ENCODE measurements at regions of chr12 and their contacts with region 1.

Region 1: DNA sequence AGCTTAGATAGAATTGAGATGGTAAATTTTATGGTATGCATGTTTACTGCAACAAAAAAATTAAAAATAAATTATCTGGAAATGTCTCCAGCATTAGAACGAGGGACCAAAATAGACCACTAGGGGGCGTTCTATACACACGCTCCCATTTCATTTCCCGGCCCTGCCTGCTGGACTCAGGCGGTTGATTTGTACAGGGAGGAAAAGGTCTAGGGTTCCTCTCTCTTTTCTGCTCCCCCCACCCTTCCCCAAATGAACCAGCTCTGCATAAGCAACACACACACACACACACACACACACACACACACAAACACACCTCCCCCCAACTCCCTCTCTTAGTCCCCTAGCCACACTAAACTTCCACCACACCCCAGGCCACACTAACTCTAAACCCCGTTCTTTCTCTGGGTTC is 7.8 kb upstream of the DTX1 start:
- DNase-seq: no peak
- ATAC-seq: peak; percentile 87
- H3K4me3 ChIP-seq: no peak overlapping the region
- H3K27ac ChIP-seq: no peak overlapping the region
- H3K4me1 ChIP-seq: peaks cover 35% of the 10 kb centered on the region
- H3K27me3 ChIP-seq: no peaks in the 10 kb centered on the region
- CTCF ChIP-seq: peak; percentile 61 to 88 (median 75)
- EP300 ChIP-seq: no peak
- POLR2A ChIP-seq: no peak
- RAD21 ChIP-seq: peak; percentile 98

Region 2: DNA sequence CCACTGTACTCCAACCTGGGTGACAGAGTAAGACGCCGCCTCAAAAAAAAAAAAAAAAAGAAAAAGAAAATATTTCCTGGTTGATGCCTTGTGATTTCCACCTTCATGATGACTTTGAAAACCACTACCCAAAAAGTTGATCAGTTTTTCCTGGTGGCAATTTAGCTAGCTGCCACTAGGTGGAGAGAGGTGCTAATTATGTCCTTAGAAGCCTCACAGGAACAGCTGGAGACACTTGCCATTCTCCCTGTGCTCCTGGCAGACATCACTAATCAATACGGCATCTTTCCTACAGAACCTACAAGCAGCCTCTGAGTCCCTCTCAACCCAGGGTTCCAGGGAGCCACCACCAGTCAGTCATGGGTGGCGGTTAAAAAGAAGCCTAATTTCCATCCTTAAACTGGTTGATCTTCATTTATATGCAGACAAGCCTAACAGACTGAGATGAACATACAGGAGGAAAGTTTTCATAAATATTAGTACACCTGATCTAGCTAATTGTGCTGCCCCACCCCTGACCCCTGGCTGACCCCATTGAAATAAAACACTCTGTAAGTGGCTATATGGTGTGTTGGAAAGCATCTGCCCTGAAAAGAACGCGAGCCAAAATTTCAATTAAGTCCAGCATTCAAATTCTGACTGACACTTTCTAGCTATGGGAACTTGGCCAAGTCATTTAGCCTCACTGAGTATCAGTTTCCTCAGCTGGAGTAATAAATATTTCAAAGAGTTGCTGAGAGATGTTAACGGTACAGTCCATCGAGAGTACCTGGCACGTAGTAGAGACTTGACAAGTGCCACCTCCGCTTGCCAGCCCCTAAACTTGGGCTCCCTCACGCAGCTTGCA is 148.2 kb before region 1 on chr12:
- CTCF ChIA-PET with region 1: interaction called, 8 read pairs
- POLR2A ChIA-PET with region 1: no interaction called
- RAD21 ChIA-PET with region 1: no interaction called
- SMC1A ChIA-PET with region 1: interaction called, 11 read pairs
- in situ Hi-C with region 1: no loop called
- intact Hi-C with region 1: no loop called
- DNase-seq: no peak
- ATAC-seq: peak; percentile 75
- H3K4me3 ChIP-seq: no peak overlapping the region
- H3K27ac ChIP-seq: no peak overlapping the region
- H3K4me1 ChIP-seq: peaks cover 6% of the 10 kb centered on the region
- H3K27me3 ChIP-seq: no peaks in the 10 kb centered on the region
- CTCF ChIP-seq: peak; percentile 68 to 84 (median 73)
- EP300 ChIP-seq: no peak
- POLR2A ChIP-seq: no peak
- RAD21 ChIP-seq: peak; percentile 82

Region 3: DNA sequence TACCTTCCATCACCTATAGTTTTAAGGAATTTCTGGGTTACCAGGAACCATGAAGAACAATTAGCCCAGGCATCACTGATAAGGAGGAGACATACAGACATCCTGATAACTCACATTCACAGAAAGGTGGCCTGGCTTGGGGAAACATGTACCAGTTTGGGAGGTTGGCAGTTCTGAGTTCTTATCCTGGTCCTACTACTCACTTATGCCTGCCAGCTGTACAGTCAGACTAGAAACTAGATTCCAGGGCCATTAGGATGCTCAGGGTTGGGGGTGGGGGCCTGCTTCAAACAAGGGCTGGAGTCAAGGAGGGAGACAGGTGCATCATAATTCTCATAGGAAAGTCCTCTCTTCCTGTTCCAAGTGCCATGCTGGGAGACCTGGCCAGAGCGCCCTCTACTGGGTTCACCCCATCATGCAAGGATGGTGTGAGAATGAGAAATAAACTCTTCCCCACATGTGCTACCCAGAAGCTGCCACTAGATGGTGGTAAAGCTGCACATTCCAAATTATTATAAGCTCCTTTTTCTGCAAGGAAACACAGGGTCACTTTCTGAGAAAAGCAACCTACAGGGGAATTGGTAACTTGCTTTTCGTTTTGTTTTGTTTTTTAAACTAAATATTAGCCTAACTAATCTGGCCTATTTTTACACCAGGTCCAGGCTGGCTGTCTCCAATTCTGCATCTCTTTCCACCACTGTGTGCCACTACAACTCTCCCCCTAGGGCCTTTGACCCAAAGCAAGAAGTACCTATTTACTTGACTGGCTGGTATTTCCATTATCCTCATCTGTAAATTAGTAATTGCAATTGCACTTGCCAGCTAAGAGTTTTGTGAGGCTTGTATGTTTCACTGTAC is 56.0 kb before region 1 on chr12:
- CTCF ChIA-PET with region 1: interaction called, 14 read pairs
- POLR2A ChIA-PET with region 1: no interaction called
- RAD21 ChIA-PET with region 1: interaction called, 5 read pairs
- SMC1A ChIA-PET with region 1: interaction called, 12 read pairs
- in situ Hi-C with region 1: no loop called
- intact Hi-C with region 1: no loop called
- DNase-seq: no peak
- ATAC-seq: peak; percentile 74
- H3K4me3 ChIP-seq: no peak overlapping the region
- H3K27ac ChIP-seq: no peak overlapping the region
- H3K4me1 ChIP-seq: no peaks in the 10 kb centered on the region
- H3K27me3 ChIP-seq: no peaks in the 10 kb centered on the region
- CTCF ChIP-seq: peak; percentile 81 to 99 (median 83); a peak in 5 of 6 replicates
- EP300 ChIP-seq: no peak
- POLR2A ChIP-seq: no peak
- RAD21 ChIP-seq: peak; percentile 81

Region 4: DNA sequence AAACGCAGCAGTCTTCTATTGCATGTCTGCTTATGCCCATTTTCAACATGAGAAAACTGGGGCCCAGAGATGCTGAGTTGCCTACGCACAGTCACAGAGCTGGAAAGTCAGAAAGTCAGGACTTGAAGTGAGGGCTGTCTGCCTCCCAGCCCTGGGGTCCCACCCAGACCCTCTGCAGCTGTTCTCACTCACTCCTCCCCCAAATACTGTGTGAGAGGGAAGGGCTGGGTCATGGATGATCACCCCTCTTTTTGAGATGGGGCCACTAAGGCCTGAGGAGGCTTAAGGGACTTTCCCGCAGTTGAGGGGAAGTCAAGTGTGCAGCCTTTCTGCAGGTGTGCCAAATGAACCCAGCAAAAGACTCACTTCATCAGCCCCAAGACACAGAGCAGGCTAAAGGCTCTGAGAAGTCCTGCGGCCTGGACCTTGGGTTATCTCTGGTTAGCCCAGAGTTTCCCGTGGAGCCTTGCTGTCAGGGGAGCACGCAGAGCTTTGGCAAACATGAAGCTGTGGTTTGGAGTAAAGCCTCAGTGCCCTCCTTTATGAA is 26.5 kb after region 1 on chr12:
- CTCF ChIA-PET with region 1: interaction called, 40 read pairs
- POLR2A ChIA-PET with region 1: no interaction called
- RAD21 ChIA-PET with region 1: interaction called, 6 read pairs
- SMC1A ChIA-PET with region 1: interaction called, 9 read pairs
- in situ Hi-C with region 1: no loop called
- intact Hi-C with region 1: loop called (anchors 1 kb)
- DNase-seq: peak; percentile 95
- ATAC-seq: peak; percentile 94
- H3K4me3 ChIP-seq: peak overlapping the region; percentile 43; the same call in 1 of the 2 replicates
- H3K27ac ChIP-seq: peak overlapping the region; percentile 71
- H3K4me1 ChIP-seq: peaks cover 53% of the 10 kb centered on the region
- H3K27me3 ChIP-seq: no peaks in the 10 kb centered on the region
- CTCF ChIP-seq: no peak
- EP300 ChIP-seq: peak; percentile 63 to 82; a peak in 2 of 4 replicates
- POLR2A ChIP-seq: peak; percentile 30; the same call in 1 of the 2 replicates
- RAD21 ChIP-seq: 0 out of 2 replicates have a peak, but pooled peaks have one; percentile 8

Region 5: GRCh38 chr12:113092607-113093408 is 44.1 kb after region 1 on chr12:
- CTCF ChIA-PET with region 1: interaction called, 121 read pairs
- POLR2A ChIA-PET with region 1: interaction called, 4 read pairs
- RAD21 ChIA-PET with region 1: interaction called, 50 read pairs
- SMC1A ChIA-PET with region 1: interaction called, 416 read pairs
- in situ Hi-C with region 1: loop called (anchors 10 kb)
- intact Hi-C with region 1: loop called (anchors 1 kb)
- DNase-seq: no peak
- ATAC-seq: peak; percentile 50
- H3K4me3 ChIP-seq: no peak overlapping the region
- H3K27ac ChIP-seq: no peak overlapping the region
- H3K4me1 ChIP-seq: peaks cover 31% of the 10 kb centered on the region
- H3K27me3 ChIP-seq: no peaks in the 10 kb centered on the region
- CTCF ChIP-seq: peak; percentile 48 to 54 (median 53); a peak in 5 of 6 replicates
- EP300 ChIP-seq: no peak
- POLR2A ChIP-seq: no peak
- RAD21 ChIP-seq: peak; percentile 69

Region 6: DNA sequence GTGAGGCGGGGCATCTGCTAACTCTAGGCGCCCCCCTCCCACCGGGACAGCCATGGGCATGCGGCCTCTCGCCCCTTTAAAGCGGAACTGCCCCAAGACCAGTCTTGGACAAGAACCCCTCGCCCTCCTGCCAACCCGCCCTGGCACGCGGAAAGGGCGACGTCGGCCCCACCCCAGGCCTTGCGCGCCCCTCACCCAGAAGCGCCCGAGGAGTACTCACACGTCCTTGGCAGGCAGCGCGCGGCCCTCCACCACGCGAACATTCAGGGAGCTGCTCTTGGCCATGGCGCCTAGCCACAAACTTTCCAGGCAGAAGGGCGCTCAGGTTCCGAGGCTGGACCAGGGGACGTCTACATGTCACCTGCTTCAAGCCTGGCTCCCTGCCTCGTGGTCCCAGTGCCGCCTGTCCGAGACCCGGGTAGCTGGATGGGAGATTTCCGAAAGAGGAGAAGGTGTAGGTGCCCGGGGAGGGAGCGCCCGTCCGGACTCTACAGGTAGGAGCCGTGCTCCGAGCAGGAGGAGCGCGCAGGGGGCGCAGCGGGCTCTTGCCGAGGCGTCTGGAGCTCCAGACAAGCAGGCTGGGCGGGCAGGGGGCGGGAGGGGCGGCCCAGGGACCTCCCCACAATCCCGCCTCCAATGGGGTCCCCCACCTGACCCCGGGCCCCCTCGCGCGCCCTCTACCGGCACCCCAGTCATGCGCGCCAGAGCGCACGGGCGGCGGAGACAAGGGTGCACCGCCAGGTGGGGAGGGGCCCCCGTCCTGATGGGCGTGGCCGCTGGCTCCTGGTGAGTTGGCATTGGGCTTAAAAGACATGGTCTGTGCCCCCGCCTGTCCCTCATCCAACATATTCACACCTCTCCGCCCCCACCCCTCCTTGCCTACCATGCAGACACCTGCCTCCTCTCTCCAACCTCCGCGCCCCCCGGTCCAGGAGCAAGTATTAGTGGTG is 86.7 kb after region 1 on chr12 and contains the start of gene RASAL1:
- CTCF ChIA-PET with region 1: interaction called, 17 read pairs
- POLR2A ChIA-PET with region 1: no interaction called
- RAD21 ChIA-PET with region 1: interaction called, 6 read pairs
- SMC1A ChIA-PET with region 1: interaction called, 3 read pairs
- in situ Hi-C with region 1: no loop called
- intact Hi-C with region 1: no loop called
- DNase-seq: no peak
- ATAC-seq: peak; percentile 91
- H3K4me3 ChIP-seq: no peak within 1 kb of the TSS
- H3K27ac ChIP-seq: no peak within 1 kb of the TSS
- H3K4me1 ChIP-seq: peaks cover under 1% of the 10 kb centered on the region; the same call in 1 of the 2 replicates
- H3K27me3 ChIP-seq: no peaks in the 10 kb centered on the region; a peak in 2 of 4 replicates
- CTCF ChIP-seq: peak; percentile 41 to 69 (median 53)
- EP300 ChIP-seq: no peak
- POLR2A ChIP-seq: no peak
- RAD21 ChIP-seq: no peak
- polyA plus RNA-seq, gene RASAL1: not detected